Activated naive CD4-positive, alpha-beta T cell treated with anti-CD3 and anti-CD28 coated beads, Interleukin-2, amount 10 ng/mL, durations not matched to agents 7 days and 5 days (primary cell): ENCODE measurements at regions of chr5 and their contacts with region 1.

Region 1: DNA sequence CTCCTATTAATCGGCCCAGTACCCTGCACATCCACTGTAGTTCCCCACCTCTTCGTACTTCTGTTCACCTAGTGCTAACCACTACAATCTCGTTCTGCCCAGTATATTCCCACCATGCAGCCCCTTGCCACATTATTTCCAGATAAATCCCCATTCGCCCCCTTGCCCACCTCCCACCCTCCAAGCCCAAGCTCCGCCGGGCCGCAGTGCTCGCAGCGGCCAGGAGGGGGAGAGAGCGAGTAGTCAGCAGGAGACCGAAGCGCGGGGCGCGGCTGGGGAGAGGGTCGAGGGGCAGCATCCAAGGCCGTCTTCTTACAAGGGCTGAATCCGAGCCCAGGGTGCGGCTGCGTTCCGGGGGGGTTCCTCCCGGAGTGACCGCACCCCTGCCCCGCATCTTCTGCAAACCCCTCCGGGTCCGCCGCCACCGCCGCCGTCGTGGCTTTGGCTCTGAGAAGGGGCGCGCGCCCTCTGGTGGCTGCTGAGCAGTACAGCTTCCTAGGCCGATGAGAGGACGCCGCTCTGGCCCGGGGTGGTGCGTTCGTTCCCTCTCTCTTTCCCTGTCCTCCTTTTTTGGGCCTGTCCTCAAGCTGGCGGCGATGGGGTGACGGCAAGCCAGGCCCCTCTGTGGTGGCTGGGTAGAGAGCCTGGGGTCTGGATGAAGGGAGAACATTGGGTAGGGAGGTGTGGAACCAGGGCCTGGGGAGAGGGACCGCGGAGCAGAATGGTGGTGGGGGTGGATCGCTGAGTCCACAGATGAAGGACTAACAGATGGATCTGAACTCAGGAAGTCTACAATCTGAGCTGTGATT is 30.0 kb upstream of the PSD2 start:
- DNase-seq: peak; percentile 85
- H3K4me3 Mint-ChIP-seq: peak overlapping the region; percentile 63
- H3K27ac Mint-ChIP-seq: no peak overlapping the region
- H3K4me1 Mint-ChIP-seq: peaks cover 8% of the 10 kb centered on the region
- H3K27me3 Mint-ChIP-seq: peaks cover 81% of the 10 kb centered on the region

Region 2: GRCh38 chr5:139740138-139740991 is 25.2 kb before region 1 on chr5:
- CTCF ChIA-PET with region 1: interaction called, 10 read pairs
- DNase-seq: no peak
- H3K4me3 Mint-ChIP-seq: no peak overlapping the region
- H3K27ac Mint-ChIP-seq: no peak overlapping the region
- H3K4me1 Mint-ChIP-seq: no peaks in the 10 kb centered on the region
- H3K27me3 Mint-ChIP-seq: peaks cover 43% of the 10 kb centered on the region

Region 3: DNA sequence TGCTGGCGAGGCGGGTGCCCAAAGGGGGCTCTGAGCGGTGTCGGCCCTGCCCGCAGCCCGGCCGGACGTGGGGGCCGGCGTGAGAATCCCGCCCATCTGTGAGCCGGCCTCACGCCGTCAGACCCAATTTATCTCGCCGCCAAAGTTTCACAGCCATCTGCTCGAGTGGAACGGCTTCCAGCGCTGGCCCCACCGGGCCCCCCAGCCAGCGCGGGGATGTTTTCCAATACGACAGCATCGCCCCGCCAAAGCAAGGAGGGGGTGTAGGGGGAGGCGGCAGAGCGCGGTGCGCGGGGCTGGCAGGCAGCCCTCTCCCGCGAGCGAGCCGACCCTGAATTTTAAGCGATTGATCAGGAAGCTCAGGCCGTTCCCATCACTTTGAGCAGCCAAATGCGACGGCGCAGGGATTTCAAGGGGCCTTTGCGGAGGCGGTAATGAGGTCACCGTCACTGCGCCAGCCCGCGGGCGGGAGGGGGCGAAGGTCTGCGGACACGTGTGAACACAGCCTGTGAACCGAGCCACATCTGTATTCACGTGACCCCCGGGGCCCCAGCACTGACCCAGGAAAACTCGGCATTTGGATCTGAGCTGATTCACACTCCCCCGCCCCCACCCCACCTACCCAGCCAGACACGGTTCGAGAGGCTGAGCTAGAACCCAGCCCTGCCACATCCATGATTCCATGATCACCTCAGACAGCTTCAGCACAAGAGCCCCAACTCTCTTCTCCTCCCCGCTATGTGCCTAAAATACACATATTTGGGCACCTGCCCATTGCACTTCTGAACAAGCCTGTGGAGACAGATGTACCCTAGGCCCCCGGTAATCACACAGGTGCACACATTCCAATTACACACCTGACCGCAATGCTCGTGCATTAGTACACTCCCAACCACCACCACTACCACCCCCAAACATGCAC is 17.8 kb before region 1 on chr5:
- CTCF ChIA-PET with region 1: interaction called, 16 read pairs
- DNase-seq: peak; percentile 40
- H3K4me3 Mint-ChIP-seq: peak overlapping the region; percentile 37
- H3K27ac Mint-ChIP-seq: no peak overlapping the region
- H3K4me1 Mint-ChIP-seq: peaks cover 27% of the 10 kb centered on the region
- H3K27me3 Mint-ChIP-seq: peaks cover 95% of the 10 kb centered on the region

Region 4: DNA sequence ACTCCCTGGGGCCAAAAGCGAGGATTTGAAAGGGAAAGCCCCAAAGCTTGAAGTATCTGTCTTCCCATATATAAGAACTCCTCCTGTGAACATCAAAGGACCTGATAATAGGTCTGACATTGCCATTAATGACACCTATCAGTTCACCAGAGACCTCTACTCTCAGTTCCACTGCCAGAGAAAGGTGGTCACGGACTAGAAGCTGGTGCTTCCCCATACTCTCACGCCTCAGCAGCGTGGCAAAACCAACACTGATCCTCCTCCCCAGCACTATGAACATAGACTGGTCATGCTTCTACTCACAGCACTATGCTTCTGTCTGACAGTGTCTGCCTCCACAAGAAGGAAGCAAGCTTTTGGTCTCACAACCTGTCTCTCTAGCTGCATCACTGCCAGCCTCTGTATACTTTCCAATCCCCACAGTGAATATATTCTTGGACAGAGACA is 239.6 kb after region 1 on chr5:
- CTCF ChIA-PET with region 1: no interaction called
- DNase-seq: no peak
- H3K4me3 Mint-ChIP-seq: no peak overlapping the region
- H3K27ac Mint-ChIP-seq: no peak overlapping the region
- H3K4me1 Mint-ChIP-seq: no peaks in the 10 kb centered on the region
- H3K27me3 Mint-ChIP-seq: peaks cover 43% of the 10 kb centered on the region